Naive thymus-derived CD4-positive, alpha-beta T cell (primary cell): ENCODE measurements at regions of chr2 and their contacts with region 1.

Region 1: DNA sequence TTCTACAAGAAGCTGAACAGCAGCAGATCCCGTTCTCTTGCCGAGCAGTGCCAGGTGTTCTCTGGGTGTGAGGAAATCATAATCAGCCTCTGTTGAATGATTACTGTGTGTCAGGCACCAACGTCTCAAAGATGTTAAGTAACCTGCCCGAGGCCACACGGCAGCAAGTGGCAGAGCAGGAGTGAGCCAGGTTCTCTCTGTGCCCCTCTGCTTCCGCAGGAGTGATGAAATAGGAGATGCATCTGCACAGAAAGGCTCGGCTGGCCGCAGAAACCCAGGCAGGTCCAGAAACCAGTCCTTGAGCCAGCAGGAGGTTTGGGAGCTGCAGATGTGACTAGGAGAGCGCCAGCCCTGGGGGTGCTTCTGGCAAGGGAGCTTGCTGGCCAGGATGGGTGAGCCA is 68.4 kb downstream of the COPS7B start:
- DNase-seq: no peak
- ATAC-seq: no peak
- H3K4me3 ChIP-seq: no peak overlapping the region
- H3K4me3 Mint-ChIP-seq: no peak overlapping the region
- H3K27ac ChIP-seq: no peak overlapping the region
- H3K27ac Mint-ChIP-seq: no peak overlapping the region
- H3K4me1 ChIP-seq: peaks cover 0 to 2% of the 10 kb centered on the region in 2 donors
- H3K4me1 Mint-ChIP-seq: peaks cover 0 to 6% (median 4%) of the 10 kb centered on the region in 7 donors
- H3K27me3 ChIP-seq: no peaks in the 10 kb centered on the region
- H3K27me3 Mint-ChIP-seq: peaks cover 0 to 19% (median 8%) of the 10 kb centered on the region in 5 donors

Region 2: DNA sequence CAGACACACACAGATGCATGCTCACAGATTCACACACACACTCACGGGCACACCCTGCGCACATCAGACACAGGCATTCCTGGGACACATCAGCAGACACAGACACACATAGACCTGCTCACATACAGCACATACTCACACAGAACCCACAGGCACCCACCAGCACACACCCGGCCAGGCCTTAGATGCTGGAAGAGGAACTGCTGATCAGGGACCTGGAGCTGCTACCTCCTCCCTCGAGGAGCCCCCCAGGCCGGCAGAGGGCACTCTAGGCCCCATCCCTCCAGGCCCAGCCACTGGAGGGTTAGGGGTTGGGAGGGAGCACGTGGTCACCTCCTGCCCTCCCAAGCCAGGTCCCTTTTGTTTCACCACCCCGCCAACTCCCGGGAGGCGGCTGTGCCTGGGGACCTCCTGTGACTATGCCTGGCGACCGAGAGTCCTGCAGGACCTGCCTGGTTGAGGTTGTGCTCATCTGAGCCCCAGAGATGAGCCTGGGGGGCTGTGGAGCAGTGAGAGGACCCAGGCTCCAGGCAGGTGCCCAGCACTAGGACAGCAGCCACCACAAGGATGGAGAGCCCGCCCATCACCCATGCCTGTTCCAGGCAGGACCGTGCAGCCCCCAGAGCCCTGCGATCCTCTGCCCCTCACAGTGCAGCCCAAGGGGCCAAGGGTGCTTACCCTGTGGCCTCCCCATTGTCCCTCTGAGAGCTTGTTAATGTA is 167.4 kb before region 1 on chr2:
- CTCF ChIA-PET with region 1: no interaction called
- POLR2A ChIA-PET with region 1: no interaction called
- intact Hi-C with region 1: no loop called
- DNase-seq: peak; percentile 50 to 70 (median 64)
- ATAC-seq: peak; percentile 91
- H3K4me3 ChIP-seq: no peak overlapping the region
- H3K4me3 Mint-ChIP-seq: no peak overlapping the region
- H3K27ac ChIP-seq: no peak overlapping the region
- H3K27ac Mint-ChIP-seq: peak overlapping the region in 1 of 9 donors; percentile 8
- H3K4me1 ChIP-seq: no peaks in the 10 kb centered on the region
- H3K4me1 Mint-ChIP-seq: peaks cover 0 to 11% (median 8%) of the 10 kb centered on the region in 7 donors
- H3K27me3 ChIP-seq: no peaks in the 10 kb centered on the region
- H3K27me3 Mint-ChIP-seq: peaks cover 5 to 14% (median 8%) of the 10 kb centered on the region in 5 donors

Region 3: GRCh38 chr2:231907787-231908186 is 53.1 kb after region 1 on chr2:
- CTCF ChIA-PET with region 1: no interaction called
- POLR2A ChIA-PET with region 1: no interaction called
- intact Hi-C with region 1: loop called in 1 of 2 experiments (anchors 2 kb)
- DNase-seq: no peak
- ATAC-seq: no peak
- H3K4me3 ChIP-seq: no peak overlapping the region
- H3K4me3 Mint-ChIP-seq: no peak overlapping the region
- H3K27ac ChIP-seq: no peak overlapping the region
- H3K27ac Mint-ChIP-seq: no peak overlapping the region
- H3K4me1 ChIP-seq: peaks cover 0 to 10% of the 10 kb centered on the region in 2 donors
- H3K4me1 Mint-ChIP-seq: peaks cover 2 to 27% (median 14%) of the 10 kb centered on the region in 7 donors
- H3K27me3 ChIP-seq: no peaks in the 10 kb centered on the region
- H3K27me3 Mint-ChIP-seq: no peaks in the 10 kb centered on the region

Region 4: GRCh38 chr2:232521959-232522622 is 667.4 kb after region 1 on chr2:
- CTCF ChIA-PET with region 1: no interaction called
- POLR2A ChIA-PET with region 1: no interaction called
- intact Hi-C with region 1: loop called in 1 of 2 experiments (anchors 5 kb)
- DNase-seq: peak; percentile 31 to 82 (median 64)
- ATAC-seq: peak; percentile 80
- H3K4me3 ChIP-seq: peak overlapping the region; percentile 20
- H3K4me3 Mint-ChIP-seq: peak overlapping the region in 5 of 10 donors; percentile 45 to 80 (median 66)
- H3K27ac ChIP-seq: no peak overlapping the region
- H3K27ac Mint-ChIP-seq: no peak overlapping the region
- H3K4me1 ChIP-seq: peaks cover 0 to 7% of the 10 kb centered on the region in 2 donors
- H3K4me1 Mint-ChIP-seq: peaks cover 2 to 17% (median 11%) of the 10 kb centered on the region in 7 donors
- H3K27me3 ChIP-seq: peaks cover 0 to 9% of the 10 kb centered on the region in 2 donors
- H3K27me3 Mint-ChIP-seq: peaks cover 18 to 40% (median 31%) of the 10 kb centered on the region in 5 donors